PC-9 (cell line): ENCODE measurements at regions of chr12 and their contacts with region 1.

Region 1: GRCh38 chr12:118061011-118061875 is at the start of gene WSB2:
- DNase-seq: peak in 1 of 2 experiments; percentile 55
- H3K4me3 ChIP-seq: peak within 1 kb of the TSS; percentile 79
- H3K27ac ChIP-seq: peak within 1 kb of the TSS; percentile 94
- H3K4me1 ChIP-seq: peaks cover 34% of the 10 kb centered on the region
- H3K27me3 ChIP-seq: no peaks in the 10 kb centered on the region
- CTCF ChIP-seq: no peak
- total RNA-seq, gene WSB2: 44.2 and 46.2 TPM in 2 replicates

Region 2: GRCh38 chr12:117968826-117969659 is 92.2 kb before region 1 on chr12 and contains the start of gene KSR2:
- CTCF ChIA-PET with region 1: no interaction called
- POLR2A ChIA-PET with region 1: interaction called, 4 read pairs
- intact Hi-C with region 1: loop called (anchors 2 kb)
- DNase-seq: peak; percentile 74 to 88
- H3K4me3 ChIP-seq: peak within 1 kb of the TSS; percentile 69
- H3K27ac ChIP-seq: peak within 1 kb of the TSS; percentile 67
- H3K4me1 ChIP-seq: peaks cover 9% of the 10 kb centered on the region; the same call in 1 of the 2 replicates
- H3K27me3 ChIP-seq: no peaks in the 10 kb centered on the region
- CTCF ChIP-seq: no peak
- total RNA-seq, gene KSR2: 1.0 and 2.0 TPM in 2 replicates

Region 3: GRCh38 chr12:118035246-118036041 is 25.8 kb before region 1 on chr12:
- CTCF ChIA-PET with region 1: interaction called, 12 read pairs
- POLR2A ChIA-PET with region 1: no interaction called
- intact Hi-C with region 1: no loop called
- DNase-seq: no peak
- H3K4me3 ChIP-seq: no peak overlapping the region
- H3K27ac ChIP-seq: no peak overlapping the region
- H3K4me1 ChIP-seq: no peaks in the 10 kb centered on the region
- H3K27me3 ChIP-seq: no peaks in the 10 kb centered on the region
- CTCF ChIP-seq: no peak

Region 4: GRCh38 chr12:118135788-118136558 is 74.7 kb after region 1 on chr12 and contains the start of gene PEBP1:
- CTCF ChIA-PET with region 1: no interaction called
- POLR2A ChIA-PET with region 1: no interaction called
- intact Hi-C with region 1: loop called (anchors 2 kb)
- DNase-seq: peak; percentile 85 to 96
- H3K4me3 ChIP-seq: peak within 1 kb of the TSS; percentile 83
- H3K27ac ChIP-seq: 0 out of 2 replicates have a peak within 1 kb of the TSS, but pooled peaks have one; percentile 34
- H3K4me1 ChIP-seq: peaks cover 38% of the 10 kb centered on the region
- H3K27me3 ChIP-seq: no peaks in the 10 kb centered on the region
- CTCF ChIP-seq: no peak
- total RNA-seq, gene PEBP1: 188 and 189 TPM in 2 replicates

Region 5: DNA sequence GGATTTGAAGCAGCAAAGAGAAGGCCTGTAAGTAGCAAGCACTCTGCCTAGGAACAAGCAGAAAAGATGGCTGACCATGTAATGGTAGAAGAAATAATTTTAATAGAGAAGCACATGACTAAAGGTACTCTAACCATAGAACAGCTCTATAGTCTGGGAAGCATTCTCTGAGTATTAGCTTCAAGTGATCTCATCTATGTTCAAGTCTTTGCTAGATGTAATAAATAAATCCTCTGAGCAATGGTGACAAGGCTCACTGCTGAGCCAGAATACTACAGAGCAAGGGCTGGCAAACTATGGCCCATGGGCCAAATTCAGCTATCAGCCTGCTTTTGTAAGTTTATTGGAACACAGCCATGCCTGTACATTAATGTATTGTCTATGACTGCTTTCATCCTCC is 159.5 kb after region 1 on chr12:
- CTCF ChIA-PET with region 1: no interaction called
- POLR2A ChIA-PET with region 1: no interaction called
- intact Hi-C with region 1: no loop called
- DNase-seq: no peak
- H3K4me3 ChIP-seq: no peak overlapping the region
- H3K27ac ChIP-seq: no peak overlapping the region
- H3K4me1 ChIP-seq: no peaks in the 10 kb centered on the region
- H3K27me3 ChIP-seq: no peaks in the 10 kb centered on the region
- CTCF ChIP-seq: no peak

Region 6: DNA sequence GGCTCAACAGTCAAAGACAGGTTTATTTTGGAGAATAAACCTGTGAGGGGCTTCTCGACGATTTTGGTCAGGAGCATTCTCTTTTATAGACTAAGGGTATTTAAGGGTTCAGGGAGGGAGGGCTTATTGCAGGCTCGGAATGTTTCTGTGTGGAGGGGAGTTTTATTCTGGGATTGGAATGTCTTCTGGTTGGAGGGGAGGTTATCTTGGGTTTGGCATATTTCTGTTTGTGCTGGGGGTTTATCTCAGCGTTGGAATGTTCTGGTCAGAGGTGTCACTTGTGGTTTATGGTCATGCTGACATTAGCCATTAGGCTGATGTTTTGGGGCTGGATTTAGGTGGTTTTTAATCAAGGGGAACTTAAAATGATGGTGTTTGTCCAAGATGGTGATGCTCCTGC is 419.0 kb after region 1 on chr12:
- CTCF ChIA-PET with region 1: no interaction called
- POLR2A ChIA-PET with region 1: interaction called, 11 read pairs
- intact Hi-C with region 1: no loop called
- DNase-seq: no peak
- H3K4me3 ChIP-seq: no peak overlapping the region
- H3K27ac ChIP-seq: no peak overlapping the region
- H3K4me1 ChIP-seq: no peaks in the 10 kb centered on the region
- H3K27me3 ChIP-seq: peaks cover 71% of the 10 kb centered on the region
- CTCF ChIP-seq: no peak

Region 7: DNA sequence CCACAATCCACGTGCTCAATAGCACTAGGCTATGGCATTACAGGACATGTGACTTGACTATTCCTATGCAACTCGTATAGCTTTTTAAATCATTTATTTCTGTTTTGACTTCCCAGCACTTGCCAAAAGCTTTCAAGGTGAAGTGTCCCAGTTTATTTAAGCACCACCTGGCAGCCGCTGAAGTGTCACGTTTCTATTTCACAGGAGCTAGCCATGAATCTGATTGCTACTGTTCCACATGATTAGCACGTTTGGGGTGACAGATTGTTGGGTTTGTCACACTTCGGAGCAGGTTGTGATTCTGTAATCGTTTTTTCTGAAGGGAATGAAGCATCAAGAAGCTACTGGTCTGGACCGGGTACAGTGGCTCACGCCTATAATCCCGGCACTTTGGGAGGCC is 1887.9 kb after region 1 on chr12:
- CTCF ChIA-PET with region 1: interaction called, 16 read pairs
- POLR2A ChIA-PET with region 1: no interaction called
- intact Hi-C with region 1: no loop called
- DNase-seq: no peak
- H3K4me3 ChIP-seq: no peak overlapping the region
- H3K27ac ChIP-seq: no peak overlapping the region
- H3K4me1 ChIP-seq: no peaks in the 10 kb centered on the region
- H3K27me3 ChIP-seq: no peaks in the 10 kb centered on the region
- CTCF ChIP-seq: no peak